ENCODE measurements at regions of chr2 and their contacts with region 1.

Region 1: DNA sequence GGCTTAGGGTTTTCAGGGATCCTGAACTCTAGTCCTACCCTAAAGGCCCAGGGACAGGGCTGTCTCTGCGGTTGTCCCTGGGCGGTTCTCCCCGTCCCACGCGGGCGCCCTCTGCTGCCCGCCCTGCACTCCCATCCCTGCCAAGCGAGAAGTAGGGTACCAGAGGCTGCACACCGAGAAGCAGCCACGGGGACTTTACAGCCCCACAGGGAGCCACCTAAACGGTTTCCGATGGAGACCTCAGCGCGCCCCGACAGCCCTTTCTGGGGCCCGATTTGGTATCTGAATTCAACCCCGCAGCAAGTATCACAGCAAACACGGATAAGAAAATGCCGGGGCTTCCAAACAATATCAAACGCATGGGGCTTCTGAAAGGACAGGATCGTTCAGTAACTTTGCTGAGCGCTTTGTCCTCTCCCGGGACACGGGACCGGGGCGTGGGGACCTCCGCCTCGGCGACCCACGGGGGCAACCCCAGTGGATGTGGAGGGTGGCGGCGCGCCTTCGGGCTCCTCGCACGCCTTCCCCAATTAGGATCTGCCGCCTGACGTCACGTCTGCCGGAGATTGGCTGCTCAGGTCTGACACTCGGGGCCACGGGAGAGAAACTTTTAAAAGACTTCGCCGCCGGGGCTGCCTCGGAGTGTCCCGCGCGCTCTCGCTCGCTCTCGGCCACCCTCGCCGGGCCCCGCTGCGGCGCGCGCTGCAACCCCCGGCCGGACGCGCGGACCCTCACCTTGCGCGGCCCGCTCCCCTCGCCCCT is at the start of gene LTBP1:
- DNase-seq: peak; percentile 28 to 84
- H3K4me3 ChIP-seq: peak within 1 kb of the TSS; percentile 83 to 100
- H3K27ac ChIP-seq: peak within 1 kb of the TSS; percentile 74 to 91
- H3K4me1 ChIP-seq: no peaks in the 10 kb centered on the region
- H3K27me3 ChIP-seq: no peaks in the 10 kb centered on the region
- CTCF ChIP-seq: peak; percentile 49 to 88 (median 70)
- total RNA-seq, gene LTBP1: 295 TPM

Region 2: DNA sequence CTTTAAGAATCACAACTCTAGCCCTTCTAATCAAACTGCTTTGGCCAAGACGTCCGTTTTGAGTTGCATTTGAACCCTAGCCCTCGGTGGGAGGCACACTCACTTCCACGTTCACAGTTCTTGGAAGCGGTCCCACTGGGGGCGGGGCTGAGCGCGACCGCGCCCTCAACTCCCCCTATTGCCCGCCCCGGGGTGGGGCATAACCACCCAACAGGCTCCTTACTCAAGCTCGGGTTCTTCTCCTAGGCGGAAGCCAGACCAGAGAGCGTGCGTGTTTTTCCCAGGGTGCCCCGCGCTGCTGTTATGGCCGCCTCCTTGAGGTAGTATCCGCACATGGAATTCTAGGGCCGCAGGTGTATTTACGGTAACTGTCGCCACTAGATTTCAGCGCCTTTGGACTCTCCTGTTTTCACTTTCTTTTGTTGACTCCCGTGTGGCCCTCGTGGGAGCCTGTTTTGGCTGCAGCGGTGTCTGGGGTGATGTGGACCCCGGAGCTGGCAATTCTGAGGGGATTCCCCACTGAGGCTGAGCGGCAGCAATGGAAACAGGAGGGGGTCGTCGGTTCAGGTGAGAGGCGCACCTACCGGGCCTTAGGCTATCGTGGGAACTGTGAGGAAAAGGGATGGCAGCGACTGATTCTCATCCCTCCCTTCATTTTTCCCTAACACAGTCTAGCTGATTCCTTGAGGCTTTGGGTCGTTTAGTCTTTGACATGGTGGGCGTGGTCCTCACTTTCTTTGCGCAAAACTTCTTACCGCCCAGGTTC is 318.5 kb before region 1 on chr2 and contains the start of gene TTC27:
- intact Hi-C with region 1: loop called (anchors 10 kb)
- DNase-seq: peak; percentile 88 to 98
- H3K4me3 ChIP-seq: peak within 1 kb of the TSS; percentile 63 to 83
- H3K27ac ChIP-seq: peak within 1 kb of the TSS; percentile 70 to 74
- H3K4me1 ChIP-seq: peaks cover 6 to 12% of the 10 kb centered on the region in 2 donors
- H3K27me3 ChIP-seq: no peaks in the 10 kb centered on the region
- CTCF ChIP-seq: no peak
- total RNA-seq, gene TTC27: 118 TPM

Region 3: GRCh38 chr2:32825291-32825712 is 121.2 kb before region 1 on chr2:
- intact Hi-C with region 1: no loop called
- DNase-seq: no peak
- H3K4me3 ChIP-seq: no peak overlapping the region
- H3K27ac ChIP-seq: no peak overlapping the region
- H3K4me1 ChIP-seq: peaks cover 0 to 4% of the 10 kb centered on the region in 2 donors
- H3K27me3 ChIP-seq: no peaks in the 10 kb centered on the region
- CTCF ChIP-seq: no peak

Region 4: DNA sequence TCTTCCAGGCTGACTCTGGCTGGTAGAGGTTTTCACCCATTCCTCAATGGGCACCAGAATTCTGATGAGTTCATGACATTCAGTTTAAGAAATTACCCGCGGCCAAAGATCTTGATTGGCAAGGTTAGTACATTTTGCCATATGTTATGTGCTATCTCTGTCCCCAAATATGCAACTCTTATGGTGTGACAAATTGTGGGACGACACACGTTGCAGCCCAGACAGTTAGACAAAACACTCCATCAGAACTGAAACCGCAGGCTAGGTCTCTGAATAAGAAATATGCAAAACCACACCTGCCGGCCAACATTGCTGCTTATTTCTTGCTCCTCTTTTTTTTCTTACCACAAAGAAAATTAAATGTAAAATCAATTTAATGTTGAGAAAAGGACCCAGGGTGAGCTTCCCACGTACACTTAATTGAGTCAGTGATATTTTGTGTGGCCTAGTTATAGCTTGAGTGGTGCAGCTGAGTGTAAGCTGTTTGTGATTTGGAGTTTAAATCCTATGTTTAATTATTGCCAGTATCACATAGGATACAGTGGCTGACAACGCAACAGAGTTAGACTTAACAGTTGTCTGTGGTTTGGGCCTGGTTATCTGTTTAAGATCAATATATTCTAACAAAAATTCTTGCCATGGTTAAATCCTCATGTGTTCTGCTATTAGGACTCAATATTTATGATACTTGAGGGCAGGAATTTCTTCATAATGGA is 35.5 kb before region 1 on chr2:
- intact Hi-C with region 1: no loop called
- DNase-seq: no peak
- H3K4me3 ChIP-seq: no peak overlapping the region
- H3K27ac ChIP-seq: no peak overlapping the region
- H3K4me1 ChIP-seq: no peaks in the 10 kb centered on the region
- H3K27me3 ChIP-seq: no peaks in the 10 kb centered on the region
- CTCF ChIP-seq: no peak

Region 5: DNA sequence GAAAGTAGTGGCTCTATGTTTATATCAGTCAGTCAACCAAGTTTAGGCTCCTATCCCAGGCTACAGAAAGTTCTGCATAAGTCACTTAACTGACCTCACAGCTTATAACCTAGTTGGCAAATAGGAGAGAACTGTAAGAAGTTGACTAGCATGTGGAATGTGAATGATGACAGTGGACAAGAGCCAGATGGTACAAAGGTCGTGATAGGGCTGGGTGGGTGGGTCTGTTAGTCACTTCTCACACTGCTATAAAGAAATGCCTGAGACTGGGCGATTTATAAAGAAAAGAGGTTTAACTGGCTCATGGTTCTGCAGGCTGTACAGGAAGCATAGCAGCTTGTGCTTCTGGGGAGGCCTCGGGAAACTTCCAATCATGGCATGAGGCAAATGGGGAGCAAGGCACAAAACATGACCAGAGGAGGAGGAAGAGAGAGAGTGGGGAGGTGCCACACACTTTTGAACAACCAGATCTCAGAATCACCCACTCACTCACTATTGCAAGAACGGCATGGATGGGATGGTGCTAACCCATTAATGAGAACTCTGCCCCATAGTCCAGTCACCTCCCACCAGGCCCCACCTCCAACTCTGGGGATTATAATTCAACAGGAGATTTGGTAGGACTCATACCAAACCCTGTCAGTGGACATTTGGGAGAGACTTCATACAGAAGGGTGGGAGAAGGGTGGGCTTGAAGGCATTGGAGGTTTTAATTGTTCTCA is 69.1 kb after region 1 on chr2:
- intact Hi-C with region 1: loop called (anchors 2 kb)
- DNase-seq: no peak
- H3K4me3 ChIP-seq: no peak overlapping the region
- H3K27ac ChIP-seq: peak overlapping the region; percentile 30 to 68
- H3K4me1 ChIP-seq: peaks cover 5 to 19% of the 10 kb centered on the region in 2 donors
- H3K27me3 ChIP-seq: no peaks in the 10 kb centered on the region
- CTCF ChIP-seq: no peak

Region 6: DNA sequence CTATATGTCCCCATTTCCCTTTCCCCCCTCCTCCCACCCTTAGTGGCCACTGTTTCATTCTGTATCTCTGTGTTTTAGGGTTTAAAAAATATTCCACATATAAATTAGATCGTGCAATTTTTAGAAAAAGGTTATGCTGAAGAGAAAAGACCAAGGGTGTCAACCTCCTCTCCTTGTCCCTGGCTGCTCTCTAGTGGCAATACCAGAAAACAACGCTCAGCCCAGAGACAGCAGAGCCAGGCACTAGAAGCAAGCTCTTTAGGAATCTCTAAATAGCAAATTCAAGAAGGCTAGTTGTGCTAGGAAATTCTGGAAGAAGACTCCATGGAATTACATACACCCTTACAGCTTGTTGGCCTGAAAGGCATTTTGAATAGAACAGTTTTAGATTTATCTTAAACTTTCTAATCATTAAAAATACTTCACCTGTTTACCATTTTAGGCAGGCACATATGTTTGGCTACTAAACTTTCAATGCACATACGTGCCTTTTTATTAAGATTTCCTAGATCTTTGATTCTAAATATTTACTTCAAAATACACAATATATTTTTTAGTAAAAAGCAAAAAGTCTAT is 494.8 kb after region 1 on chr2:
- intact Hi-C with region 1: loop called (anchors 10 kb)
- DNase-seq: peak in 1 of 2 donors; percentile 80
- H3K4me3 ChIP-seq: no peak overlapping the region
- H3K27ac ChIP-seq: no peak overlapping the region
- H3K4me1 ChIP-seq: peaks cover 5 to 7% of the 10 kb centered on the region in 2 donors
- H3K27me3 ChIP-seq: no peaks in the 10 kb centered on the region
- CTCF ChIP-seq: peak; percentile 62 to 87 (median 75)